SK-N-SH (cell line): ENCODE measurements at regions of chr12 and their contacts with region 1.

Region 1: DNA sequence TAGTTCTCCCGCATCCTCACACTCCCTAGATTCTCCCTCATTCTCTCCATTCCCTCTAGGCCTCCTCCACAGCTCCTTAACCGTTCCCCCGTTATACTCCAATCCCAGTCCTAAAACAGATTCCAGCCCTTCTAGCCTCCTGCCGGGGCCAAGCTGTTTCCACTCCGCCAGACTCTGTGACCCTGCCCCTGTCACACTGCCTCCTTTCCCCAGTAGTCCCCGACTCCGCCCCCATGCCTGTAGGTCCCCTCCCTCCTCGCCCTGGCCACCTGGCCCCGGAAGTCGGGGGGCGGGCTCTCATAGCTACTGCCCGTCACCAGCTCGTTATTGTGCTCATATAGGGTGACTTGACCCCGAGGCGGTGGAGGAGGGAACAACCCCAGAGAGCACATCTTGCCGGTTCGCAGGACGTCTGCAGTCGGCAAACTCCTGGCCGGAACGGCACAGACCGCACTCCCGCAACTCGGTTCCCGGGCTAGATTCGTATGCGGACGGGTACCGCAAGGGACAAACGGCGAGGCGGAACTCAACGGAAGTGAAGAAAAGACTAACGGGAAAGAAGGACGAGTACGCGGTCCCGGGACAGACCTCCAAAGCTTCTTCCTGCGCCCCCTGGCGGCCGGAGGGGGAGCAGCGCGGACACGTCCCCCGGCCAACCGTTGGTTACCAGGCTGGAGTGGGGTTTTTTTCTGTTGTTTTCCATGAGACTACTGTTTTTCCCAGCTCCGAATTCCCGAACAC is at the start of gene AAAS:
- DNase-seq: peak; percentile 97
- H3K4me3 ChIP-seq: peak within 1 kb of the TSS; percentile 69 to 88
- H3K27ac ChIP-seq: peak within 1 kb of the TSS; percentile 86 to 94
- H3K4me1 ChIP-seq: peaks cover 7 to 18% of the 10 kb centered on the region in 2 experiments; a peak in 3 of 4 replicates
- H3K27me3 ChIP-seq: no peaks in the 10 kb centered on the region
- CTCF ChIP-seq: peak; percentile 97
- EP300 ChIP-seq: no peak
- RAD21 ChIP-seq: peak; percentile 27
- polyA plus RNA-seq, gene AAAS: 64.9 and 70.6 TPM in 2 replicates

Region 2: GRCh38 chr12:53213348-53213747 is 107.9 kb before region 1 on chr12:
- CTCF ChIA-PET with region 1: interaction called, 14 read pairs
- POLR2A ChIA-PET with region 1: no interaction called
- DNase-seq: peak; percentile 93
- H3K4me3 ChIP-seq: no peak overlapping the region
- H3K27ac ChIP-seq: no peak overlapping the region; a peak in 1 of 4 replicates
- H3K4me1 ChIP-seq: peaks cover 6 to 19% of the 10 kb centered on the region in 2 experiments; a peak in 3 of 4 replicates
- H3K27me3 ChIP-seq: no peaks in the 10 kb centered on the region
- CTCF ChIP-seq: peak; percentile 93
- EP300 ChIP-seq: no peak
- RAD21 ChIP-seq: peak; percentile 96

Region 3: DNA sequence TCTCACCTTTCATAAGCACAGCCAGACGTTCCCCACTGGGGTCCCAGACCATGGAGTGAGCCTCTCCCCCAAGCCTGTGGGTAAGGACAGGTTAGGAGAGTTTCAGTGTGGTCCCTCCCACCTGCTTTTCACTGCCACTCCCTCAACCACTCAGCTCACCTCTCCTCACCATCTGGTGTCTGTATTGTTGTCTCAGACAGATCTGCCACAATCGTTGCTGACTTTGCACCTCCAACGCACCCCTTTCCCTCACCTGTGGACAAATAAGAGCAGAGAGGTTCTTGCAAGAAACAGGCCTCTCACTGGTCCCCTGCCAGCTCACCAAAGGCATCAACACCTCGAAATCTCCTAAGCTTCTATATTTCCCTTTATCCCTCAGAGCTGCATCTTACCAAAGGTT is 13.0 kb before region 1 on chr12:
- CTCF ChIA-PET with region 1: interaction called, 39 read pairs
- POLR2A ChIA-PET with region 1: interaction called, 4 read pairs
- DNase-seq: no peak
- H3K4me3 ChIP-seq: no peak overlapping the region
- H3K27ac ChIP-seq: no peak overlapping the region
- H3K4me1 ChIP-seq: no peaks in the 10 kb centered on the region; a peak in 1 of 4 replicates
- H3K27me3 ChIP-seq: no peaks in the 10 kb centered on the region
- CTCF ChIP-seq: no peak
- EP300 ChIP-seq: no peak
- RAD21 ChIP-seq: no peak

Region 4: DNA sequence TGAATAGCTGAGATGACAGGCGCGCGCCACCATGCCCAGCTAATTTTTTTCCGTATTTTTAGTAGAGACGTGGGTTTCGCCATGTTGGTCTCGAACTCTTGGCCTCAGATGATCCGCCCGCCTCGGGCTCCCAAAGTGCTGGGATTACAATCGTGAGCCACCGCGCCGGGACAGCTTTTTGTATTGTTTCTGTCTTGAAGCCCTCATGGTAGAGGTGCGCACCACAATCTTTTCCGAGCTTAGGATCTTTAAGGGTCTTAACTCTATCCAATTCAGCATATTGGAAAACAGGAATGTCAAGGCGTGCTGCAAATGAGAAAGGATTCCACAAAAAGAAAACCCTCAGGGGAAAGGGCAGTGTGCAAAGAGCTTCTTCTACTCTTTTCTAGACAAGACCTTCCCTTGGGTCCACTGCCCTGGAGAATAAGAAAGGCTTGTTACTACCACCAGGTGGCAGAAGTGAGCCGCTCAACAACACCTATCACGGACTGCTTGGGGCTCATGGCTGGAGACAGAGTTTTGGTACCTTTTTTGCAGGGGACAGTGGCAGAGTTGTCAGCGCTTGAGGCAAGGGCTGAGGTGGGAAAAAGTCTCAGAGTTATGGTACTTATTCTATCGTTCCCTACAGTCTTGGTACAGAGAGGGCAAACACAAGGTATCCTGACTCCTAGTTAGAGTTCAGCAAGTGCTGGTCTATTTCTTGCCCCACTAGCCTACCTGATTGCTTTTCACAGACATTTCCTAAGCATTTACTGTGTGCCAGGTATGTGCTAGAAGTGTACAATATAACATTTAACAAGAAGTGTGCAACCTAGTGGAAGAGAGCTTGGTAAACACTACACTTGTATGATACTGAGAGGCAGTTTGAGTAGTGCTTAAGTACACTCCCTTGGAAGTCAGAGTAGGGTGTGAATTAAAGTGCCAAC is 31.4 kb after region 1 on chr12:
- CTCF ChIA-PET with region 1: interaction called, 294 read pairs
- POLR2A ChIA-PET with region 1: interaction called, 6 read pairs
- DNase-seq: peak; percentile 80
- H3K4me3 ChIP-seq: no peak overlapping the region; a peak in 1 of 4 replicates
- H3K27ac ChIP-seq: no peak overlapping the region
- H3K4me1 ChIP-seq: no peaks in the 10 kb centered on the region
- H3K27me3 ChIP-seq: no peaks in the 10 kb centered on the region
- CTCF ChIP-seq: peak; percentile 85
- EP300 ChIP-seq: no peak
- RAD21 ChIP-seq: peak; percentile 96

Region 5: DNA sequence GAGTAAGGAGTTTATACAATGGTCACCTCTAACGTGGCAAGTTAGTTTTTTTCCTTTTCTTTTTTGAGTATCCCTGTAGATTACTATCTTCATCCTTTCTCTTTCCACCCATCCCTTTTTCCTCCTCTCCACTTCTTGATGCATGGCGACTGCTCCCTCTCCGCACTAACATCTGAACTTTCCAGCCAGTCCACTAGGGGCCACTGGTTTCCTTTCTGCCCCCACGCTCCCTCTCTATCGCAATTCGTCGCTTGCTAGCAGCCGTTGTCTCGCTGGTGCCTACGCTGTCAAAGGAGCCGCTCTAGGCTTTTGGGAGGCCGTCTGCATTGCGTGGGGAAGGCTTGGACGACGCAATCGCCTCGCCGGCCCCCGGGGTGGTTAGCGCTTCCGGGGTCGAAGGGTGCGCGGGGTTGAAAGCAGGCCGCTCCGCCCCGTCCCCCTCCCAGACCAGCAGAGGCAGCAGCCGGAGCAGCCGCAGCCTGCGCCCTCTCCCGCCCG is 130.5 kb after region 1 on chr12 and contains the start of gene PCBP2:
- CTCF ChIA-PET with region 1: interaction called, 10 read pairs
- POLR2A ChIA-PET with region 1: interaction called, 4 read pairs
- DNase-seq: peak; percentile 96
- H3K4me3 ChIP-seq: peak within 1 kb of the TSS; percentile 68 to 83
- H3K27ac ChIP-seq: peak within 1 kb of the TSS; percentile 95 to 96
- H3K4me1 ChIP-seq: peaks cover 10 to 13% of the 10 kb centered on the region in 2 experiments; a peak in 3 of 4 replicates
- H3K27me3 ChIP-seq: no peaks in the 10 kb centered on the region
- CTCF ChIP-seq: peak; percentile 85
- EP300 ChIP-seq: 0 out of 4 replicates have a peak, but pooled peaks have one; percentile 4 to 17
- RAD21 ChIP-seq: no peak
- polyA plus RNA-seq, gene PCBP2: 336 and 368 TPM in 2 replicates

Region 6: GRCh38 chr12:53508534-53509199 is 187.4 kb after region 1 on chr12:
- CTCF ChIA-PET with region 1: interaction called, 46 read pairs
- POLR2A ChIA-PET with region 1: interaction called, 3 read pairs
- DNase-seq: peak; percentile 84
- H3K4me3 ChIP-seq: peak overlapping the region in 1 of 2 experiments; percentile 21; a peak in 1 of 4 replicates
- H3K27ac ChIP-seq: peak overlapping the region in 1 of 2 experiments; percentile 31; a peak in 1 of 4 replicates
- H3K4me1 ChIP-seq: peaks cover 0 to 12% of the 10 kb centered on the region in 2 experiments; a peak in 3 of 4 replicates
- H3K27me3 ChIP-seq: no peaks in the 10 kb centered on the region
- CTCF ChIP-seq: peak; percentile 93
- EP300 ChIP-seq: no peak
- RAD21 ChIP-seq: peak; percentile 97